Mammary epithelial cell (primary cell): ENCODE measurements at regions of chr16 and their contacts with region 1.

Region 1: DNA sequence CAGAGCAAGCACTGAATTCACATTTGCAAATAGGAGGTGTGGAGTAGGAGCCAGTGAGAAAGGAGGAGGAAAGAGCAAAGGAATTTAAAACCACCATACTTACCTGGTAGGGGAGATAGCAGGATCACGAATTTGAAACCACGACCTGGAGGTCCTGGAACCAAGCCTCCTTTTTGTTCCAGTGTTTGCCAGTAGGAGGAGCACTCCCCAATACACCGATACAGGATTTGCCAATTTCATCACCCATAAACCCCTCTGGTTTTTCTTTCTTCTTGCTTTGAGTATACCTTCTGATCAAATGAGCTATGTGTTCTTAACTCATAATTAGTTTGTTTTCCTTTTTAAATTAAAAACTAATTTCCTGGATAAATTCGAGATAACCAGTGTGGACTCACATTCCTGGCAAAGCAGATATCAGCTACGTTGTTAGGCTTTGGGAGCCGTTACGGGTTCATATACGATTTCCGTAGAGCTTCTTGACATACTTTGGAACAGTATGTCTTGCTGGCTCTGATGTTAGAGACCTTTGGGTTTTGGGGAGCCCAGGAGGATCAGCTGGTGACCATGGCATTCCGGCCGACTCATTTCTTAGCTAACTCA is 22.7 kb downstream of the BCO1 start:
- DNase-seq: no peak
- H3K4me3 ChIP-seq: no peak overlapping the region
- H3K27ac ChIP-seq: no peak overlapping the region
- H3K4me1 ChIP-seq: no peaks in the 10 kb centered on the region
- H3K27me3 ChIP-seq: no peaks in the 10 kb centered on the region
- CTCF ChIP-seq: peak; percentile 75 to 78

Region 2: GRCh38 chr16:81307760-81308159 is 46.6 kb after region 1 on chr16:
- CTCF ChIA-PET with region 1: interaction called, 4 read pairs
- dilution Hi-C with region 1: loop called (anchors 5 kb)
- in situ Hi-C with region 1: no loop called
- intact Hi-C with region 1: no loop called
- DNase-seq: no peak
- H3K4me3 ChIP-seq: no peak overlapping the region
- H3K27ac ChIP-seq: no peak overlapping the region
- H3K4me1 ChIP-seq: no peaks in the 10 kb centered on the region
- H3K27me3 ChIP-seq: no peaks in the 10 kb centered on the region
- CTCF ChIP-seq: no peak

Region 3: GRCh38 chr16:81314603-81315270 is 53.6 kb after region 1 on chr16 and contains the start of gene GAN:
- CTCF ChIA-PET with region 1: interaction called, 4 read pairs
- dilution Hi-C with region 1: no loop called
- in situ Hi-C with region 1: no loop called
- intact Hi-C with region 1: loop called (anchors 2 kb)
- DNase-seq: peak; percentile 96
- H3K4me3 ChIP-seq: peak within 1 kb of the TSS; percentile 63 to 89 (median 79)
- H3K27ac ChIP-seq: peak within 1 kb of the TSS; percentile 76
- H3K4me1 ChIP-seq: peaks cover 31% of the 10 kb centered on the region
- H3K27me3 ChIP-seq: no peaks in the 10 kb centered on the region
- CTCF ChIP-seq: no peak
- total RNA-seq, gene GAN: 14.9 to 33.2 TPM

Region 4: DNA sequence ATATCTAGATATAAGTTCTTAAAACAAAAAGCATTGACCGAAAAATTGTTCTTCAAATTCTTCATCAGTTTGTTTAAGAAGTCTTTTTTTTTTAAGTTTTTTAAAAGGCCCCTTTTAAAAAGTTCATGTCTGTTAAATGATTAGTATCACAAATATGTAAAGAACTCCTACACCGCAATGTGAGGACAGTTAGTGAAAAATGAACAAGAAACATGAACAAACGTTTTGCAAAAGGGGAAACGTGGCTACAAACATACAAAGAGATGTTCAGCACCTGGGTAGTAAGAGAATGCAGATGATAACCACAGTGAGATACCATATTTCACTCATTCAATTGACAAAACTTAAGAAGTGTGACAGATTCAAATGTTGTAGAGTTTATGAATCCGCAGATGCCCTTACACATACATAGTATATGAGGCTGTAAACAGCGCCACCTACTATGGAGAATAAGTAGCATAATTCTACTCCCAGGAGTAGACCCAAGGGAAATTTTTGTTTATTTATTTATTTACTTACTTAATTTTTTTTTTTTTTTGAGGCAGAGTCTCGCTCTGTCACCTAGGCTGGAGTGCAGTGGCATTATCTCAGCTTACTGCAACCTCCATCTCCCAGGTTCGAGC is 89.0 kb after region 1 on chr16:
- CTCF ChIA-PET with region 1: interaction called, 4 read pairs
- dilution Hi-C with region 1: no loop called
- in situ Hi-C with region 1: no loop called
- intact Hi-C with region 1: loop called (anchors 1 kb)
- DNase-seq: no peak
- H3K4me3 ChIP-seq: no peak overlapping the region
- H3K27ac ChIP-seq: no peak overlapping the region
- H3K4me1 ChIP-seq: no peaks in the 10 kb centered on the region
- H3K27me3 ChIP-seq: no peaks in the 10 kb centered on the region
- CTCF ChIP-seq: peak in 1 of 2 donors; percentile 45

Region 5: DNA sequence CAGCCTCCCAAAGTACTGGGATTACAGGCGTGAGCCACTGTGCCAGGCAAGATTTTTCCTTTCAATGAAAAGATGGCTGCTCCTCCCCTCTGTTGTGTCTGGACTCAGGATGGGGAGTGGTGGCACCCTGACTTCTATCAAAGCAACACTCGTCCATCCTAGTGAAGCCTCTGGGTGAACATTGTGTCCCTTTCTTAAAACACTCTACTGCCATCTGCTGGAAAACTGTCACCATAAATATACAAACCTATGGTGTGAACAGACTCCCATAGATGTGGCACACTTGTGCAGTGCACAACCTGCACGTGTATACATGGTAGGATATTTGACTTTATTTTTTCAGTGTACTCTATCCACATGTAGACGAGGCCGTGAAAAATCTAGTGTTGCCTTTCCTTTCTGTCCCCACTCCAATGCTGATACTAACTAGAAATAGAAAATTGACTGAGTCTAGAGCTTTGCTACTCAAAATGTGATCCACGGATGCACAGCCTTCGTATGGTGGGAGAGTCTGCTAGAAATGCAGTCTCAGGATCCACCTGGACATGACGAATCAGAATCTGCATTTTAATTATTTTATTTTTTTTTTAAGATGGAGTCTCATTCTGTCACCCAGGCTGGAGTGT is 462.1 kb after region 1 on chr16:
- CTCF ChIA-PET with region 1: interaction called, 3 read pairs
- dilution Hi-C with region 1: no loop called
- in situ Hi-C with region 1: no loop called
- intact Hi-C with region 1: loop called (anchors 1 kb)
- DNase-seq: peak; percentile 73
- H3K4me3 ChIP-seq: no peak overlapping the region
- H3K27ac ChIP-seq: no peak overlapping the region
- H3K4me1 ChIP-seq: peaks cover 8% of the 10 kb centered on the region
- H3K27me3 ChIP-seq: no peaks in the 10 kb centered on the region
- CTCF ChIP-seq: peak; percentile 50 to 66

Region 6: GRCh38 chr16:81730090-81731051 is 469.2 kb after region 1 on chr16:
- CTCF ChIA-PET with region 1: interaction called, 27 read pairs
- dilution Hi-C with region 1: no loop called
- in situ Hi-C with region 1: no loop called
- intact Hi-C with region 1: no loop called
- DNase-seq: peak; percentile 53
- H3K4me3 ChIP-seq: peak overlapping the region in 2 of 3 experiments; percentile 3 to 29
- H3K27ac ChIP-seq: peak overlapping the region; percentile 15
- H3K4me1 ChIP-seq: peaks cover 12% of the 10 kb centered on the region
- H3K27me3 ChIP-seq: no peaks in the 10 kb centered on the region
- CTCF ChIP-seq: peak; percentile 54 to 75

Region 7: DNA sequence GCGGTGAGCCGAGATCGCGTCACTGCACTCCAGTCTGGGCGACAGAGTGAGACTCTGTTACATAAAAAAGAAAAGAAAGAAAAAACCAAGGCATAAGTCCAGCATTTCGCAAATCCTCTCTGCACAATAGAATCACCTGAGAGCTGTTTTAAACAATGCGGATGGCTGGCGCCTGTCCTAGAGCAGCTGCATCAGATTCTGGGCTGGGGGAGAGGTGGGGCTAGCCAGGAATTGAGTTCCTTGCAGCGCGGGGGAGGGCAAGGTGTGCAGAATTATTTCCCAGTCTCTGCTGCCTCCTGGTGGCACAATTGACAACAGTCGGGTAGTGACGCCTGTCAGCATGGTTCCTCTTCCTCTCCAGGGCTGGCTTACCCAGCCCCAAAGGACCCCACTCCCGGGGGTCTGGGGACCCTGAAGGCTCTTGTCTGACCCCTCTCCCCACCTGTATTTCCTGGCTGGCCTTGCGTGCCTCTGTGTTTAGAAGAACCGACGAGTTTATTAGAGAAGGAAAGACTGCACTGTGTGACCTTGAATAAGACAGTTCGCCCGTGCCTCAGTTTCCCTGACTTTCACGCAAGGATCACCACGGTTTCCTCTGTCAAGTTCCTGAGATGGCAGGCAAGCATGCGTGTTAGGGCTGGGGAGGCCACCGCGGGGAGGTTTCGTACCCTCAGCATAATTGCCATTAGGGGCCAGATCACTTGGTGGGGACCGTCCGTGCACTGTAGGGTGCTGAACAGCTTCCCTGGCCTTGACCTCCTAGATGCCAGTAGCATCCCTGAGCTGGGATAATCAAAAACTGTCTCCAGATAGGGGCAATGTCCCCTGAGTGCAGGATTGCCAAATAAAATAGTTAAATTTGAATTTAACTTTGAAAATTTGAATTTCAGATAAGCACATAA is 477.0 kb after region 1 on chr16:
- CTCF ChIA-PET with region 1: no interaction called
- dilution Hi-C with region 1: no loop called
- in situ Hi-C with region 1: no loop called
- intact Hi-C with region 1: loop called (anchors 1 kb)
- DNase-seq: peak; percentile 88
- H3K4me3 ChIP-seq: peak overlapping the region in 1 of 3 experiments; percentile 18
- H3K27ac ChIP-seq: no peak overlapping the region
- H3K4me1 ChIP-seq: peaks cover 3% of the 10 kb centered on the region
- H3K27me3 ChIP-seq: no peaks in the 10 kb centered on the region
- CTCF ChIP-seq: peak; percentile 81 to 83